A549 (cell line): ENCODE measurements at regions of chr1 and their contacts with region 1.

Region 1: GRCh38 chr1:151510957-151511635 is at the start of gene CGN:
- DNase-seq: peak; percentile 70 to 85
- ATAC-seq: peak; percentile 91 to 97
- H3K4me3 ChIP-seq: peak within 1 kb of the TSS; percentile 64
- H3K27ac ChIP-seq: peak within 1 kb of the TSS; percentile 69 to 86
- H3K4me1 ChIP-seq: peaks cover 36% of the 10 kb centered on the region
- CTCF ChIP-seq: no peak
- EP300 ChIP-seq: no peak
- POLR2A ChIP-seq: 0 out of 2 replicates have a peak, but pooled peaks have one; percentile 25
- RAD21 ChIP-seq: no peak
- polyA plus RNA-seq, gene CGN: 1.8 and 2.1 TPM in 2 replicates

Region 2: GRCh38 chr1:151539990-151540981 is 29.2 kb after region 1 on chr1 and contains the start of gene TUFT1:
- CTCF ChIA-PET with region 1: no interaction called
- POLR2A ChIA-PET with region 1: interaction called, 11 read pairs
- DNase-seq: peak; percentile 82 to 94
- ATAC-seq: peak; percentile 75 to 88
- H3K4me3 ChIP-seq: peak within 1 kb of the TSS; percentile 93
- H3K27ac ChIP-seq: peak within 1 kb of the TSS; percentile 79 to 85
- H3K4me1 ChIP-seq: peaks cover 71% of the 10 kb centered on the region
- CTCF ChIP-seq: no peak
- EP300 ChIP-seq: no peak
- POLR2A ChIP-seq: peak; percentile 100
- RAD21 ChIP-seq: peak in 1 of 2 experiments; percentile 7; a peak in 2 of 5 replicates
- polyA plus RNA-seq, gene TUFT1: 24.5 and 27.5 TPM in 2 replicates

Region 3: DNA sequence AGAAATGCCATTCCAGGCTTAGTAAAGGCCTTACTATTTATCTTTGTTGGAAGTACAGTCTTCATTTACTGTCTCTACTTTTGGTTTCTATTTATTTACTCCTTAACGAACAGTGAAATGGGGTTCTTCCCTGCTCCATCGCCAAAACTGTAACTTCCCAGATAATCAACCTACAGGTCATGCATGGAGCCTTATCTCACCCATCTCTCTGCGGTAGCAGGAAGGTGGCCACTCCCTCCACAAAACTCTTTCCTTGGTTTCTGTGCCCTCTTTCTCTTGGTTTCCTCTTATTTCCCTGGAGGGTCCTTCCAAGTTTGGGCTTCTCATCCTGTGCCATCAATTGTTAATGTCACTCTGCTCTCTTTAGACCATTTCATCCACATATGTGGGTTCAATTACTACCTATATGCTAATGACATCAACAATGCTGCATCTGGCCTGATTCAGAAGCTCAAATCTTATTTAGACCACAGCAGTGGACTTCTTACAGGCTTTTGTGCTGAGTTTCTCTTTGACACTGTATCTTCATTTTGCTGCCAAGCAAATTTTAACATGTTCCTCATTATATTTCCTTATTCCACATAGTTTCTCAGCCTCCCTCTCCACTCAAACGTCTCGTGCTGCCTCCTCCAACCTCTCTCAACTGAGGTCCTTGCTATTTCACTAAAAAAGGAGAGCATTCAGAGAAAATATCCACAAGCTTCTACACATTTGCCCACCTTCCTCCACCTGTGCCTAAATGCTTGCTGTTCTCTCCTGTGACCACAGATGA is 272.5 kb after region 1 on chr1:
- CTCF ChIA-PET with region 1: no interaction called
- POLR2A ChIA-PET with region 1: no interaction called
- DNase-seq: no peak
- ATAC-seq: no peak
- H3K4me3 ChIP-seq: no peak overlapping the region
- H3K27ac ChIP-seq: no peak overlapping the region
- H3K4me1 ChIP-seq: no peaks in the 10 kb centered on the region
- CTCF ChIP-seq: no peak
- EP300 ChIP-seq: no peak
- POLR2A ChIP-seq: no peak
- RAD21 ChIP-seq: no peak